PC-9 (cell line): ENCODE measurements at regions of chr9 and their contacts with region 1.

Region 1: DNA sequence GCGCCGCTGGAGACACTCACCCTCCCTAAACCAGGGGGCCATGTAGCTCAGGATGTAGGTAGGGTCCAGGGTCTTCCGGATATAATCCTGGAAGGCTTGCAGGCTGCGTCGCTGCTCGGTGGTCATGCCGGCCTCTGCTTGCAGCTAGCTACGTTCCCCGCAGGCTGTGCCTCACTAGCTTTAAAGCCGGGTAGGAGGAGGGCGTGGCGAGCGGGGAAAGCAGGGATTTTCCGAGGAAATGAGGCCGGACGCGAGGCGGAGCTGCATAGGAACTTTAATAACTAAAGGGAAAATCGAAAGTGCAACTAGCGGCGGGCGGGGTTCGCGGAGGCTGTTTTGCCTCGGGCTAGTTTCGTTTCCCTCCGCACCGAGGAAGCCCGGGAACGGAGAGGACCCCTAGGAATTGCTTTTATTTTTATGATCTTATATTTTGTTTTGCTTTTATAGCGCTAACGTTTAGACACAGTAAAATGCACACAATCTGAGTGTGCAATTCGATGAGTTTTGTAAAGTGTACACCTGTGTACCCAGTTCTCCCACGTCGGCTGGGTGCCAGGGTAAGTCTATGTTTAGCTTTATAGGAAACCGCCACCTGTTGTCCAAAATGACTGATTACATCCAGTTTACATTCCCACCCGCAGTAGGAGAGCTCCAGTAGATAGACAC is at the start of gene RIGI:
- DNase-seq: peak; percentile 83
- H3K4me3 ChIP-seq: peak within 1 kb of the TSS; percentile 69
- H3K27ac ChIP-seq: peak within 1 kb of the TSS; percentile 68
- H3K4me1 ChIP-seq: peaks cover 11% of the 10 kb centered on the region
- H3K27me3 ChIP-seq: no peaks in the 10 kb centered on the region
- CTCF ChIP-seq: peak; percentile 66
- total RNA-seq, gene RIGI: 3.9 and 4.2 TPM in 2 replicates

Region 2: GRCh38 chr9:31556667-31557463 is 969.3 kb before region 1 on chr9:
- CTCF ChIA-PET with region 1: no interaction called
- POLR2A ChIA-PET with region 1: interaction called, 12 read pairs
- intact Hi-C with region 1: no loop called
- DNase-seq: no peak
- H3K4me3 ChIP-seq: no peak overlapping the region
- H3K27ac ChIP-seq: no peak overlapping the region
- H3K4me1 ChIP-seq: no peaks in the 10 kb centered on the region
- H3K27me3 ChIP-seq: no peaks in the 10 kb centered on the region
- CTCF ChIP-seq: no peak

Region 3: DNA sequence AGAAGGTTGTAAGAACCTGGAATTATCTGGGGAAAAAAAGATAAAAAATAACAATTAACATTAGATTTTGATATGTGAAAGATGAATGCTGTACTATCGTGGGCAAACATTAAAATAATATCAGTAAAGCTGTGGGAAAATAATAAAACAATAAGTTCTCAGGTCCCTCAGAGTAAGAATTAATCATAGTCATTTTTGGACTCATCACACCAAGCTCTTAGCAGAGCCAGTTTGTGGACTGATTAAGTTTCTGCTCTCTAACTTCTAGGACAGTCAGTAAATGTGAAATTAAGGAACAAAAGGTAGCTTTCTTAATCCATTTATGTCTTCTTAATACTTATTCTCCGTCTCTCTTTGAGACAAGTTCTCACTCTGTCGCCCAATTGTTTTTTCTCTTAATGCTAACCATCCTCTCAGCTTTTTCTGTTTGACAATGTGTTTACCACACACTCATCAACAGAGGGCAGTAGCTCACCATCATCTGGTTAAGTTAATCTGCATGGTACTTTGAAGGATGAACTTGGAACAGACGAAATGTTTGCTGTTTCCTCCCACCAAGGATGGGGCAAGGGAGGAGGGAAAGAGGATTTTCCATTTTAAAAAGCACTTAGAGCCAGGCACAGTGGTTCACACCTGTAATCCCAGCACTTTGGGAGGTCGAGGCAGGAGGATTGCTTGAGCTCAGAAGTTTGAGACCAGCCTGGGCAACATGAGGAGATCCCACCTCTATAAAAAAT is 147.0 kb before region 1 on chr9:
- CTCF ChIA-PET with region 1: interaction called, 16 read pairs
- POLR2A ChIA-PET with region 1: no interaction called
- intact Hi-C with region 1: loop called (anchors 1 kb)
- DNase-seq: peak; percentile 35 to 41
- H3K4me3 ChIP-seq: no peak overlapping the region
- H3K27ac ChIP-seq: no peak overlapping the region
- H3K4me1 ChIP-seq: no peaks in the 10 kb centered on the region
- H3K27me3 ChIP-seq: no peaks in the 10 kb centered on the region
- CTCF ChIP-seq: peak; percentile 74

Region 4: GRCh38 chr9:32384364-32385151 is 141.6 kb before region 1 on chr9 and contains the start of gene ACO1:
- CTCF ChIA-PET with region 1: interaction called, 16 read pairs
- POLR2A ChIA-PET with region 1: no interaction called
- intact Hi-C with region 1: loop called (anchors 1 kb)
- DNase-seq: peak; percentile 62 to 87
- H3K4me3 ChIP-seq: peak within 1 kb of the TSS; percentile 84
- H3K27ac ChIP-seq: no peak within 1 kb of the TSS
- H3K4me1 ChIP-seq: no peaks in the 10 kb centered on the region
- H3K27me3 ChIP-seq: no peaks in the 10 kb centered on the region
- CTCF ChIP-seq: no peak
- total RNA-seq, gene ACO1: 26.1 and 30.2 TPM in 2 replicates

Region 5: DNA sequence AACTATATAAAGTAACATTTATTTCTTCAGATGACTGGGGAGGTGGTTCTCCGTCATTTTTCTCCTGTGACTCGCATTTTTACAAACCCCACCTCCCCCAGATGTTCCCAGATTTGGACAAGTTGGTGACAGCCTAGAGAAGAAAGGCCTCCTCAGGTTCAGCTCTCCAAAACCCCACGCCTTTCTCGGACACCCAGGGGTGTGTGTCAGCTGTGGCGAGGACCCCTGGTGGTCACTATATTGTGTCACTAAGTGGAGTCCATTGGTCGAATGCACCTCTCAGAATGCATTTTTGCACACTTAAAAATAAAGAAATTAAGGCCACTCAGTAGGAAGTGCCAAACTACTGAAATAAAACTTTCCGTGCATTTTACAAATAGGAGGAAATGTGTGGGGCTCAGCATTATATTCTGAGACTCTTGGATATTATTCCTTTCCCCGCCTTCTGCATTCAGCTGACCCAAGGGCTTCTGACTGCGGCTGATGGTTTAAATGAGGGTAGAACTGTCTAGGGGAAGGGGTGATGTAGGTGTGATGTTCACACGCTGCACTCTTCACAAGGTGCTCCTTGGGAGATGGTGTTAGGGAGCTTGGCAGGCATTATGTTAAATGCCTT is 94.1 kb before region 1 on chr9:
- CTCF ChIA-PET with region 1: interaction called, 4 read pairs
- POLR2A ChIA-PET with region 1: interaction called, 5 read pairs
- intact Hi-C with region 1: loop called (anchors 2 kb)
- DNase-seq: no peak
- H3K4me3 ChIP-seq: no peak overlapping the region
- H3K27ac ChIP-seq: peak overlapping the region; percentile 52; the same call in 1 of the 2 replicates
- H3K4me1 ChIP-seq: peaks cover 18% of the 10 kb centered on the region
- H3K27me3 ChIP-seq: no peaks in the 10 kb centered on the region
- CTCF ChIP-seq: peak; percentile 40; the same call in 1 of the 2 replicates

Region 6: GRCh38 chr9:32468740-32469139 is 57.4 kb before region 1 on chr9:
- CTCF ChIA-PET with region 1: interaction called, 10 read pairs
- POLR2A ChIA-PET with region 1: no interaction called
- intact Hi-C with region 1: no loop called
- DNase-seq: no peak
- H3K4me3 ChIP-seq: no peak overlapping the region
- H3K27ac ChIP-seq: no peak overlapping the region
- H3K4me1 ChIP-seq: no peaks in the 10 kb centered on the region
- H3K27me3 ChIP-seq: no peaks in the 10 kb centered on the region
- CTCF ChIP-seq: no peak

Region 7: DNA sequence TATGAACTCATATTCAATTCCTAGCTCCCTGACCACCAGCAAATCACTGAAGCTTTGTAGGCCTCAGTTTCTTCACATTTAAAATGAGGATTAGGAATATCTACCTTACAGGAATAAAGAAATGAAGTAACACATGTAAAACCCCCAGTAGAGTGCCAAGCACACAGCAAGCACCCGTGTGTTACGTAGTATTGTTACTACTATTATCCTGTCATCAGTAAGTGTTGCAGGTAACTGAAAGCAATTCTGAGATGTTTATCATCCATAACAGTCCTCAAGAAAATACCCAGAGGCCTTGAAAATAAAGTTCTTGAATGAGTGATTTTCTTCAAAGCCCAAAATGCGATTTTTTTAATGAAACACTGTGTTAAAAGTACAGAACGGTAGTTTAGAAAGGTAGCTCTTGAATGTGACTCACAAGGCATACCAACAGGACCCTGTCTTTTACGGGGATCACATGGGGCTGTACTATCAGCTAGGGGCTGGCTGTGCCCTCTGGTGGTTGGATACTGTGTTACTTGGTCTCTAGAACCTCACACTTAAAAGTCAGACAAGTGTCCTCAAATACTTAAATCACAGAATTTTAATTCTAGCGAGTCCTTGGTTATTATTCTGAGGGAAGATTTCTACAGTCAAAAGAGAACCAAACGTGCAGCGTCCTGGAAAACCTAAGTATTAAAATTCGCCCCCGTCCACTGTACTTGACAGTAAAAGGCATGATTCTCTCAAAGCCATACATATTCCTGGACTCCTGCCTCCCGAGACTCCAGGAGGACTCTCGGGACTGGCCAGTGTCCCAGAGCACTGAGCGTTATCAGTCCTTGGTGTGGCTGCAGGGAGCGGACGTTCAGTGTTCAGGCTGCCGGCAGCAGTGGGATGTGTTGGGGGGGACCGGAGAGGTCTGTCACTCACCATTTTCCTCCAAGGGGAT is 46.1 kb after region 1 on chr9:
- CTCF ChIA-PET with region 1: interaction called, 3 read pairs
- POLR2A ChIA-PET with region 1: interaction called, 4 read pairs
- intact Hi-C with region 1: loop called (anchors 1 kb)
- DNase-seq: peak; percentile 52 to 72
- H3K4me3 ChIP-seq: peak overlapping the region; percentile 89
- H3K27ac ChIP-seq: peak overlapping the region; percentile 56
- H3K4me1 ChIP-seq: peaks cover 18% of the 10 kb centered on the region
- H3K27me3 ChIP-seq: no peaks in the 10 kb centered on the region
- CTCF ChIP-seq: peak; percentile 77

Region 8: GRCh38 chr9:32735476-32735875 is 209.3 kb after region 1 on chr9:
- CTCF ChIA-PET with region 1: no interaction called
- POLR2A ChIA-PET with region 1: no interaction called
- intact Hi-C with region 1: no loop called
- DNase-seq: no peak
- H3K4me3 ChIP-seq: no peak overlapping the region
- H3K27ac ChIP-seq: no peak overlapping the region
- H3K4me1 ChIP-seq: peaks cover 23% of the 10 kb centered on the region
- H3K27me3 ChIP-seq: no peaks in the 10 kb centered on the region
- CTCF ChIP-seq: no peak

Region 9: DNA sequence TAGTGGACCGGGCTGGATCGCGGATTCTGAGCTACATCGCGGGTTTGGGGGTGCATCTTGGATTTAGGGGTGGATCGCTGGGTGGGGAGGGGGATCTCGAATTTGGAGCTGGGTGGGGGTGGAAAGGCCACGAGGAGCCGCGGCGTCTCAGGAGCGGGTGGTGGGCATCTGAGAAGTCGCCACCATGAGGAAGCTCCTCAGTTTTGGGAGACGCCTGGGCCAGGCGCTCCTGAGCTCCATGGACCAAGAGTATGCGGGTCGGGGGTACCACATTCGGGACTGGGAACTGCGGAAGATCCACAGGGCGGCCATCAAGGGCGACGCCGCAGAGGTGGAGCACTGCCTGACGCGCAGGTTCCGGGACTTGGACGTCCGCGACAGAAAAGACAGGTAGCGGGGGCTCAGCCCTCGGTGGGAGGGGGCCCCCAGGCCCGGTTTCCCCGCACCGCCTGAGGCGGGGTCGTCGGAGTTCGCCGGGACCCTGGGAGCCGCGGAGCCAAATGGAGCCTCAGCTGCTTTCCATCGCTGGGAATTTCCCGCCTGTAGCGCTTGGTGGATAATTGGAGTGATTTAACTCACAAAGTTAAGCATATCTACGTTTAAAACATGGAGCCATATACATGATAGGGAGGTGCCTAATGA is 998.3 kb after region 1 on chr9:
- CTCF ChIA-PET with region 1: no interaction called
- POLR2A ChIA-PET with region 1: no interaction called
- intact Hi-C with region 1: no loop called
- DNase-seq: peak in 1 of 2 experiments; percentile 2
- H3K4me3 ChIP-seq: peak overlapping the region; percentile 69
- H3K27ac ChIP-seq: no peak overlapping the region
- H3K4me1 ChIP-seq: no peaks in the 10 kb centered on the region
- H3K27me3 ChIP-seq: no peaks in the 10 kb centered on the region
- CTCF ChIP-seq: no peak